Mammary epithelial cell (primary cell): ENCODE measurements at regions of chr5 and their contacts with region 1.

Region 1: GRCh38 chr5:152864991-152865390 is 459.9 kb upstream of the NMUR2 start:
- DNase-seq: peak; percentile 1
- H3K4me3 ChIP-seq: no peak overlapping the region
- H3K27ac ChIP-seq: no peak overlapping the region
- H3K4me1 ChIP-seq: no peaks in the 10 kb centered on the region
- H3K27me3 ChIP-seq: no peaks in the 10 kb centered on the region
- CTCF ChIP-seq: no peak

Region 2: GRCh38 chr5:153147891-153148623 is 283.1 kb after region 1 on chr5:
- CTCF ChIA-PET with region 1: no interaction called
- dilution Hi-C with region 1: no loop called
- in situ Hi-C with region 1: no loop called
- intact Hi-C with region 1: loop called (anchors 10 kb)
- DNase-seq: peak; percentile 78
- H3K4me3 ChIP-seq: no peak overlapping the region
- H3K27ac ChIP-seq: no peak overlapping the region
- H3K4me1 ChIP-seq: peaks cover 6% of the 10 kb centered on the region
- H3K27me3 ChIP-seq: no peaks in the 10 kb centered on the region
- CTCF ChIP-seq: peak; percentile 54 to 85